ENCODE measurements at regions of chr15 and their contacts with region 1.

Region 1: DNA sequence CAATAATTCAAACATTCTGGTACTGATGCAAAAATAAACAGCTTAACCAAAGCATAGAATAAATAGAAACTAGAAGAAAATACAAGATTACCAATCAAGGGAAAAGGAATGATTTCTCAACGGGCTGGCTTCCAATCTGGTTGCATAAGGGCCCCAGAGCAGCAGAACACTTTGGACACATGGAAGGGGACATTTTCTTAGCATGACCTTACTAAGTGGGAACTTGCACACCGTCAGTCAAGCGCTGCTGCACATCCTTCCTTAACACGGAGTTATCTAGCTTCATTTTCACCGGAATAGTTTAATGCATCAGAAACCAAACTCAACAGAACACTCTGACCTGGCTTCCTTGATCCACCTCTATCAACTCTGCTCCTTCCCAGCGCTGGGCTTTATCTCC is 388.5 kb downstream of the VPS13C start:
- DNase-seq: peak in 1 of 5 donors; percentile 35
- ATAC-seq: peak in 1 of 4 donors; percentile 29
- H3K4me3 ChIP-seq: no peak overlapping the region
- H3K27ac ChIP-seq: no peak overlapping the region
- H3K4me1 ChIP-seq: peaks cover 0 to 4% (median 0%) of the 10 kb centered on the region in 12 donors
- H3K27me3 ChIP-seq: peaks cover 0 to 22% (median 0%) of the 10 kb centered on the region in 9 donors
- CTCF ChIP-seq: no peak
- POLR2A ChIP-seq: no peak

Region 2: DNA sequence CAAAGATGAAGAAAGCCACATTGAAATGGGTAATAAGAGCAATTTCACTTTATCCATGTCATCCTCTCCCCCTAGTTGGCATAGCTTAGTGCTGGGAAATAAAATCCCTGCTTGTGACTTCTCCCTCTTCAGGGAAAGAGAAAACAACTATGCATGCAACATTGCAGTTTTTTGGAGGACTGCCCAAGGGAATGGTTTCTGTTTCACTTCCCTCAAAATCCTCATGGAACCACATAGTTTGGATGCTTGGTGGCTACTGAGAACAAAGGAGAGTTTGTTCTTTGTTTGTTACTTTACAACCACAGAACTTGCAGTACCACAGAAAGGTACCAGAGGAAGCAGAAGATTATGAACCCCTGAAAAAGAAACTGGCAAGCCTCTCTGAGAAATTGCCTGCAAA is 58.0 kb before region 1 on chr15:
- intact Hi-C with region 1: loop called in 1 of 10 experiments (anchors 10 kb)
- DNase-seq: no peak
- ATAC-seq: no peak
- H3K4me3 ChIP-seq: no peak overlapping the region
- H3K27ac ChIP-seq: no peak overlapping the region
- H3K4me1 ChIP-seq: no peaks in the 10 kb centered on the region
- H3K27me3 ChIP-seq: peaks cover 0 to 15% (median 0%) of the 10 kb centered on the region in 9 donors
- CTCF ChIP-seq: no peak
- POLR2A ChIP-seq: no peak

Region 3: GRCh38 chr15:61720197-61720596 is 48.5 kb after region 1 on chr15:
- intact Hi-C with region 1: no loop called
- DNase-seq: no peak
- ATAC-seq: peak in 1 of 4 donors; percentile 83
- H3K4me3 ChIP-seq: no peak overlapping the region
- H3K27ac ChIP-seq: no peak overlapping the region
- H3K4me1 ChIP-seq: no peaks in the 10 kb centered on the region
- H3K27me3 ChIP-seq: peaks cover 0 to 24% (median 0%) of the 10 kb centered on the region in 9 donors
- CTCF ChIP-seq: no peak
- POLR2A ChIP-seq: no peak

Measured in heart left ventricle (tissue), 16 donors.